AG04449 (cell line): ENCODE measurements at regions of chr5 and their contacts with region 1.

Region 1: DNA sequence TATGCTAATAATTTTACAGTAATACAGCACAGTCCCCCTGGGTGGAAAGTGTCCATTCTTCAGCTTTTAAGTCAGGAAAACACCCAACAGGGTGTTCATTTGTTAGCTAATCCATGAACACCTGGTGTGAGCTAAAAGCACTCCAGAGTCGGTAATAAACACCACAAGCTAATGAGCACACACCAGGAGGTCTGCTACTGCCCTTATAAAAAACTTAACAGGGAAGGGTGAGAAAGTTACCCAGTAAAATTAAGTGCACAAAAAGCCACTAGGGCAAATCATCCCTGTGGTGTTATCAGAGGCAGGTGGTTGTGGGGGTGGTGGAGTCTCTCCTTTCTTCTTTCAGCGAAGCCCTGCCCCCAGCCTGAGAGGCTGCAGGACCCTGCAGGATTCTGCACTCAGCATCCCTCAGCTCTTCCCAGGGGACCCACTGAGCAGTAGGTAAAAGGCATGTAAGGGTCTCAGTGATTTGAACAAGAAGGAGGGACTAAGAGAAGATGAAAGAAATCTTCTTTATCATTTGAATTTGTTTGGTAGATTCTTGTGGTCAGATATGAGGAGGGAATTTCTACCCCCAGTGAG is 14.4 kb downstream of the GDNF start:
- DNase-seq: no peak
- H3K4me3 ChIP-seq: no peak overlapping the region
- CTCF ChIP-seq: no peak

Region 2: DNA sequence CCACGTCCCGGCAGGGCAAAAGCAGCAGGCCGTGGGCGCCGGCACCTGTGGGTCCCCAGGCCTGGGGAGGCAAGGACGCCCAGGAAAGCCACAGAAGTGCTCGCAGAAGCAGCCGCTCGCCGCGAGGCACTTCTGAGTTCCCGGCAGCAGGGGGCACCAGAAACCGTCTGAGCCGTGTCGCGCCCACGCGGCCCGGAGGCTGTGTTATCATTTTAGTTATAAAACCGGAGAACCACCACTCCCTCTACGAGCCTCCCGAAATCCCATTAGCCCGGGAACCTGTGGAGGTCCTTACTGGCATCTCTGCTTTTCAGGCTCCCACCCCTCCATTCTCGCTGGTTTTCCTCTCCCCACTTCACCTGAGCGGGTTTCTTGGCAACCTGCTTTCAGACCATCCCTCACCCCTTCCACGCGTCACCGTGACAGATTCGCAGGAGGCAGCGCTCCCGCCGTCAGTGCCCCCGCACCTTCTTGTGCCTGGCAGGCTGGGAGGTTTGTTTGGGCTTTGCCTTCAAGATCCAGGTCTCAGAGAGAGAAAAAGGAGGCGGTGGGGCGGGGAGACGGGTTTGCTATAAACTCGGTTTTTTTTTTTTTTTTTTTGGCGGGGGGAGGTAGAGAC is 12.1 kb after region 1 on chr5:
- CTCF ChIA-PET with region 1: interaction called, 10 read pairs
- POLR2A ChIA-PET with region 1: no interaction called
- DNase-seq: no peak
- H3K4me3 ChIP-seq: peak overlapping the region; percentile 68
- CTCF ChIP-seq: peak; percentile 88